PC-9 (cell line): ENCODE measurements at regions of chrX and their contacts with region 1.

Region 1: DNA sequence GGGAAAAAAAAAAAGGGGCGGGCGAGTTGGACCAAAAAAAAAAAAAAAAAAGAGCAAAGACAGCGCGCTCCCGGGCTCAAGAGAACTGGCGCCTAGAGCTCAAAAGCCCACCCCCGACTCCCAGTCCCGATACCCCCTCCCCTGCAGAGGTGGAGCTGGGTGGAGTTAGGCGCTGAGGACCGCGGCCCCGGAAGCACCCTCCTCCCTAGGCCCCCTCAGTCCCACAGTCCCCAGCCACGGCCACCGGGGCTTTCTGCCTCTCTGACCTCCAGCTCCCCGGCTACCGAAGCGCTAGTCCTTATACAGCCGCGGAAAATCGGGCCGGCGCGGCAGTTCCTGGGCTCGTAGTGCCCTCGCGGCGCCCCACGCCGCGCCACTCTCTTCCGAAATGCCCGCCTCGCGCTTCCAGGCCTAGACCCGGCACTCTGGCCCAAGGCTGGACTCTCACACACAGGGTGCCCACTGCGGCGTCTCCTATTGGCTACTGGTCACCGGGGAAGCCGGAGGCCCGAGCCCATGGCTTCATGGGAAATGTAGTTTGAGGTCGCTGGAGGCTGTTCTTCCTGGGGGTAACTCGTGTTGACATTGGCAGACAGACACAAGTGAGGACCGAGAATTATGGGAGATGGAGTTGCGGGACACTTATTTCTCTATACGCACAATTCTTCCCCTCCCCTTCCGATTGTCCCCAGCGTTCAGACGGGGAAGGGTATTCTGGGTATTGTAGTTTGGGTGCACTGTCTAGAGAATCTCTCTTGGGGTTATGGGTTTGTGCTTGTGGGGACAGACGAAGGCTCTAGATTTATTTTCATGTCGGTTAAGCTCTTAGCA is at the start of gene ENOX2:
- DNase-seq: peak; percentile 95 to 98
- H3K4me3 ChIP-seq: peak within 1 kb of the TSS; percentile 76
- H3K27ac ChIP-seq: peak within 1 kb of the TSS; percentile 70
- H3K4me1 ChIP-seq: peaks cover 8% of the 10 kb centered on the region; the same call in 1 of the 2 replicates
- H3K27me3 ChIP-seq: no peaks in the 10 kb centered on the region
- CTCF ChIP-seq: no peak
- total RNA-seq, gene ENOX2: 18.4 and 21.4 TPM in 2 replicates

Region 2: GRCh38 chrX:130680164-130681035 is 222.6 kb before region 1 on chrX:
- CTCF ChIA-PET with region 1: no interaction called
- POLR2A ChIA-PET with region 1: no interaction called
- intact Hi-C with region 1: loop called (anchors 5 kb)
- DNase-seq: no peak
- H3K4me3 ChIP-seq: no peak overlapping the region
- H3K27ac ChIP-seq: no peak overlapping the region
- H3K4me1 ChIP-seq: peaks cover 13% of the 10 kb centered on the region
- H3K27me3 ChIP-seq: no peaks in the 10 kb centered on the region
- CTCF ChIP-seq: no peak

Region 3: DNA sequence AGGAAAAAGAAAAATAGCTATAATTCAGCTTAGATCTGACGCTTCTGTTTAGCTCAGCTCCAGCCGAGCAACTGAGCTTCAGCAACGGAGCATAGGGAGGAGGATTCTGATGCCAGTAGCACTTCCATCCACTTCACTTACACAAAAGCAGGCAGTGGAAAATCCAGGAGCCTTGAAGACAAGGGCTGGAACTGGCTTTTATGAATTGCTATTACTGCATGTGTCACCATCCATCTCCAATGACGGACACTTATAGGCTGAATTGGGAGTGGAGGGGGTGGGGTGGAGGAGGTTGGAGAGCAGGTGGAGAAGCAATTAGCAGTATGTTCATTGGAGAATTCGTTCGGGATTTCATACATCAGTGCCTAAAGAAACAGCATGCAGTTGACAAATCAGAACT is 15.6 kb before region 1 on chrX:
- CTCF ChIA-PET with region 1: no interaction called
- POLR2A ChIA-PET with region 1: no interaction called
- intact Hi-C with region 1: no loop called
- DNase-seq: no peak
- H3K4me3 ChIP-seq: no peak overlapping the region
- H3K27ac ChIP-seq: no peak overlapping the region
- H3K4me1 ChIP-seq: no peaks in the 10 kb centered on the region
- H3K27me3 ChIP-seq: no peaks in the 10 kb centered on the region
- CTCF ChIP-seq: no peak